IMR-90 (cell line): ENCODE measurements at regions of chr1 and their contacts with region 1.

Region 1: GRCh38 chr1:22275721-22276395 is 133.0 kb upstream of the WNT4 start:
- DNase-seq: peak; percentile 49
- ATAC-seq: peak; percentile 99
- H3K4me3 ChIP-seq: no peak overlapping the region
- H3K27ac ChIP-seq: no peak overlapping the region
- H3K4me1 ChIP-seq: no peaks in the 10 kb centered on the region
- H3K27me3 ChIP-seq: peaks cover 49% of the 10 kb centered on the region
- CTCF ChIP-seq: peak; percentile 75
- POLR2A ChIP-seq: no peak
- RAD21 ChIP-seq: peak; percentile 77

Region 2: GRCh38 chr1:22018583-22019559 is 257.0 kb before region 1 on chr1:
- CTCF ChIA-PET with region 1: no interaction called
- POLR2A ChIA-PET with region 1: no interaction called
- dilution Hi-C with region 1: no loop called
- in situ Hi-C with region 1: no loop called
- intact Hi-C with region 1: loop called (anchors 10 kb)
- DNase-seq: peak; percentile 88
- ATAC-seq: peak; percentile 63
- H3K4me3 ChIP-seq: no peak overlapping the region
- H3K27ac ChIP-seq: no peak overlapping the region
- H3K4me1 ChIP-seq: no peaks in the 10 kb centered on the region
- H3K27me3 ChIP-seq: 0 out of 2 replicates have a peak, but pooled peaks cover 1% of the 10 kb centered on the region
- CTCF ChIP-seq: peak; percentile 43; the same call in 1 of the 2 replicates
- POLR2A ChIP-seq: no peak
- RAD21 ChIP-seq: peak; percentile 41

Region 3: DNA sequence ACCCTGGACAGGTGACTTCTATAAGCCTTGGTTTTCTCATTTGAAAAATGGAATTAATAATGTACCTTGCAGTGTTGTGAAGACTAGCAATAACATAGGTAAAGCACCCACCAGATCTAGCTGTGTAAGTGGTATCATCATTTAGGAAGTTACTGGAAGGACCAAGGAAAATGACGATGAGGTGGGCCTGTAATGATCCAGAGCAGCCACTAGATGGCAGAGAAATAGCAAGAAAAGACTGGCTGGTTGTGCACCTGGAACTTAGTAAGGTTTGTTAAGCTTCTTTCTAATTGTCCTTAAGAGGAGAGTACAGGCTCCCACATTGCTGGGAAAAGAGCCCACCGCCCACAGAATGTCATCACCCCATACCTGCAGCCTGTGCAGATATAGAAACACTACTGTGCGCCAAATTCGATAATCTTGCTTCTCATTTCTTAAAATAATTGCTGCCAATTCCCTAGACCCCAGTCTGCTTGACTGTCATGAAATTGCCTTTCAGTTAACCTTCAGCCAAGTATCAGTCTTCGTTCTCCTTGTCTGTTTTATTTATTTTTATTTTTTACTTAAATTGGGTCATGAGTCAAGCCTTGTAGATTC is 170.1 kb before region 1 on chr1:
- CTCF ChIA-PET with region 1: interaction called, 4 read pairs
- POLR2A ChIA-PET with region 1: no interaction called
- dilution Hi-C with region 1: no loop called
- in situ Hi-C with region 1: loop called (anchors 10 kb)
- intact Hi-C with region 1: loop called (anchors 5 kb)
- DNase-seq: peak; percentile 69
- ATAC-seq: peak; percentile 77
- H3K4me3 ChIP-seq: no peak overlapping the region
- H3K27ac ChIP-seq: no peak overlapping the region
- H3K4me1 ChIP-seq: peaks cover 9% of the 10 kb centered on the region
- H3K27me3 ChIP-seq: no peaks in the 10 kb centered on the region
- CTCF ChIP-seq: peak; percentile 76
- POLR2A ChIP-seq: no peak
- RAD21 ChIP-seq: peak; percentile 74

Region 4: DNA sequence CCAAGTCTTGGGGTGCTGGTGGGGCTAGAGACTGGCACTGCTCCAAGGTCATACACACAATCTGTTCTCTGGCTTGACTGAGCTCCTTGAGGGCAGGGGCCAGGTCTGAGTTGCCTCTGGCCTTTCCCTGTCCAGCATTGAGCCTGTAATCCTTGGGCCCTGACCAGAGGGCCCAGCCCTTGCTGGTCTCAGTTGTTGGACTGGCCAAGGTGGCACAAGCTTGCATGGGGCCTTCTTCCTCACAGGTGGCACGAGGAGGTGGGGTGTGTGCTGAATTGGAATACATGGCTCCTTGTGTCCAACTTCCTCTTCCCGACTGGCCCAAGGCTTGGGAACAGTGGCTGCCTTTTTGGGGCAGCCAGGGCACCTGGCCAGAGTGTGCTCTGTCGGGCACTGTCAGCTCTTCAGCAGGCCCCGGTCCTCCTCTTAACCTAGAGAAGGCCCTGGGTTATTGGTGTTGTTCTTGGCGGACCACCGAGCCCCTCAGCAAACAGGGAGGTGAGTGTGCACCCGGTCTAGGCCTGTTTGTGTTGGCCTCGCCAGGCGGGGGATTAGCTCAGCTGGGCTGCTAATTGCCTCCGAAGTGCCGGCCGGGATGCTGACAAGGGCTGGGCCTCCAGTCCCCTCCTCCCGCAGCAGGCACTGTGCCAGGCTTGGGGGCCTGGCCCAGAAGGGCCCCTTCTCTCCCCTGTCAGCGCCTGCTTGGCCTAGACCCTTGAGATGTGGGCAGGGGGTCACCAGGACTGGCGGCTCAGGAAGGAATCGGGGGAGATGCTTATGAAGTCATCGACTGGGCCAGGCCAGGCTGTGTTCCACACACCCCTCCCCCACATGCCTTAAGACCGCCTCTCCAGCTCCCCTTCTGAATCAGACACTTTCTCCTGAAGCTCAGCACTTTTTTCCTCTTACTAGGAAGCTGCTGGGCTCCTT is 161.5 kb before region 1 on chr1:
- CTCF ChIA-PET with region 1: no interaction called
- POLR2A ChIA-PET with region 1: no interaction called
- dilution Hi-C with region 1: no loop called
- in situ Hi-C with region 1: loop called (anchors 10 kb)
- intact Hi-C with region 1: loop called (anchors 5 kb)
- DNase-seq: peak; percentile 76
- ATAC-seq: peak; percentile 69
- H3K4me3 ChIP-seq: no peak overlapping the region
- H3K27ac ChIP-seq: no peak overlapping the region; the same call in 1 of the 2 replicates
- H3K4me1 ChIP-seq: peaks cover 28% of the 10 kb centered on the region
- H3K27me3 ChIP-seq: no peaks in the 10 kb centered on the region
- CTCF ChIP-seq: no peak
- POLR2A ChIP-seq: no peak
- RAD21 ChIP-seq: no peak

Region 5: DNA sequence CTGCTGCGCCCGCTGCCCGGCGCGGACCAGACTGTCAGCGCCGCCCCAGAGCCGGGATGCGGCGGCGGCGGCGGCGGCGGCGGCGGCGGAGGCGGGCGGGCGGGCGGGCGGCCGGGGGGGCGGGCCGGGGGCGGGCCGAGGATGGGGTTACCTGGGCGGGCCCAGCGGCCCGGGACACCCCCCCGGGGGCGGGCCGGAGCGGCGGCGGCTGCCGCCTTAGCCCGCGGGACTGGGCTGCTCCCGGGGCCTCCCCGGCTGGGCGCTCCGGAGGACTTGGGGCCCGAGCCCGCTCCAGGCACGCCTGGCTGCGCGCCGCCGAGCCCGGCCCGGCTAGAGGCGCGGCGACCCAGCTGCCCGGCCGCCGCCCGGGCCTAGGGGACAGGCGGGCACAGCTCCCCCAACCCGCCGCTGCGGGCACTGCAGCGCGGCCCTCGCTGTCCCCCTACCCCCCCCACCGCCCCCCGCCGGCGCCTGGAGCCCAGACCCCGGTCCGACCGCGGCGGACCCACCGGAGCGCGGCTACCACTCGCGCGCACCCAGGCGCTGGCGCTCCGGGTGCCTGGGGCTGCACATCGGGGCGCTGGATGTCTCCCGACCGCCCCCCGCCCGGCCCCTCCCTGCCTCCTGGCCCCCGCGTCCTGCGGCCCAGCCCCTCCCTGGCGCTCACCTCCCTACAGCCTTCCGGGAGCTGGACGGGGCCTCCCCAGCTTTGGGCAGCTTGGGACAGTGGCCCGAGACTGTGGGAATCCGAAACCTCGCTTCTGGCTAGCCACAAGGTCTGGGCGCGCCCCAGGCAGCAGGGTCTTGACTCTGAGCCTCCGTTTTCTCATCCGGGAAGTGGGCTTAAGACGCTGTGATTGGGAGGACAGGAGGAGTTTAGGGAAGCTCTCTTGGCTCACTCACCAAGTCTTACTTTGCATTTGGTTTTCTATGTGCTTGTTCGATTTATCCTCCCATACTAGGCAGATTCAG is 132.5 kb before region 1 on chr1 and contains the start of gene WNT4:
- CTCF ChIA-PET with region 1: interaction called, 4 read pairs
- POLR2A ChIA-PET with region 1: no interaction called
- dilution Hi-C with region 1: no loop called
- in situ Hi-C with region 1: no loop called
- intact Hi-C with region 1: loop called (anchors 10 kb)
- DNase-seq: no peak
- ATAC-seq: peak; percentile 84
- H3K4me3 ChIP-seq: peak within 1 kb of the TSS; percentile 35
- H3K27ac ChIP-seq: no peak within 1 kb of the TSS
- H3K4me1 ChIP-seq: no peaks in the 10 kb centered on the region
- H3K27me3 ChIP-seq: peaks cover 77% of the 10 kb centered on the region
- CTCF ChIP-seq: peak; percentile 18; the same call in 1 of the 2 replicates
- POLR2A ChIP-seq: no peak
- RAD21 ChIP-seq: no peak; the same call in 1 of the 2 replicates
- total RNA-seq, gene WNT4: not detected in 2 replicates

Region 6: GRCh38 chr1:22317226-22317919 is 41.5 kb after region 1 on chr1:
- CTCF ChIA-PET with region 1: no interaction called
- POLR2A ChIA-PET with region 1: no interaction called
- dilution Hi-C with region 1: no loop called
- in situ Hi-C with region 1: no loop called
- intact Hi-C with region 1: no loop called
- DNase-seq: no peak
- ATAC-seq: peak; percentile 66
- H3K4me3 ChIP-seq: no peak overlapping the region
- H3K27ac ChIP-seq: no peak overlapping the region
- H3K4me1 ChIP-seq: no peaks in the 10 kb centered on the region
- H3K27me3 ChIP-seq: peaks cover 65% of the 10 kb centered on the region
- CTCF ChIP-seq: peak; percentile 38
- POLR2A ChIP-seq: no peak
- RAD21 ChIP-seq: peak; percentile 22; the same call in 1 of the 2 replicates

Region 7: DNA sequence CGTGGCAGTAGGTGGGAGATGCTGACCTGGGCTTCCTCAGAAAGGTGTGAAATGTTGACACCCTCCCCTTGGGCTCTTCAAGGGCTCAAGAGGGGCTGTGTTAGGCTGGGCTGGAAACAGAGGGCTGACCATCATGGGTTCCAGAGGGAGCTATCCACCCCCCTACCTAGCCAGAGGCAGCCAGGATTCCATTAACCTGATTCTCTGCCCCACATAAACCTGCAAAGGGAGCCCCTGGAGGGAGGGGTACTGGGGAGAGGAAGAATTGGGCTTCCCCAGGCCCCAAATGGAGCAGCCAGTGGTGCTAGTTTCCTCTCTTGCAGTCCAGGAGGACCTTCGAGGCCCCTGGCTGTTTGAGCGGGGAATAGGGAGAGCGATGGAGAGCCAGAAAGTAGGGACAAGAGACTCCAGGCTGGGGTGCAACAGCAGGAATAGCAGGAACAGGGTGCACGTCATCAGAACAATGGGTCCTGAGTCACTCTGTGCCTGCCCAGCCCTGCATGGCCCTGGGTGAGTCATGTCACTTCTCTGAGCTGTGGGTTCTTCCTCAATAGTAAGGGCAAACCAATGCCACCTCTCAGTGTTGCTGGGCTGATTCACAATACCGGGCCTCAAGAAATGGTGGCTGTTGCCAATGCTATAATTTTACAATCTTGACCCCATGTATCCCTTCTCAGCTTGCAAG is 556.0 kb after region 1 on chr1:
- CTCF ChIA-PET with region 1: no interaction called
- POLR2A ChIA-PET with region 1: no interaction called
- dilution Hi-C with region 1: no loop called
- in situ Hi-C with region 1: no loop called
- intact Hi-C with region 1: no loop called
- DNase-seq: peak; percentile 93
- ATAC-seq: peak; percentile 83
- H3K4me3 ChIP-seq: no peak overlapping the region
- H3K27ac ChIP-seq: no peak overlapping the region
- H3K4me1 ChIP-seq: peaks cover 23% of the 10 kb centered on the region
- H3K27me3 ChIP-seq: no peaks in the 10 kb centered on the region
- CTCF ChIP-seq: no peak
- POLR2A ChIP-seq: no peak
- RAD21 ChIP-seq: no peak